ENCODE measurements at regions of chr18 and their contacts with region 1.

Region 1: DNA sequence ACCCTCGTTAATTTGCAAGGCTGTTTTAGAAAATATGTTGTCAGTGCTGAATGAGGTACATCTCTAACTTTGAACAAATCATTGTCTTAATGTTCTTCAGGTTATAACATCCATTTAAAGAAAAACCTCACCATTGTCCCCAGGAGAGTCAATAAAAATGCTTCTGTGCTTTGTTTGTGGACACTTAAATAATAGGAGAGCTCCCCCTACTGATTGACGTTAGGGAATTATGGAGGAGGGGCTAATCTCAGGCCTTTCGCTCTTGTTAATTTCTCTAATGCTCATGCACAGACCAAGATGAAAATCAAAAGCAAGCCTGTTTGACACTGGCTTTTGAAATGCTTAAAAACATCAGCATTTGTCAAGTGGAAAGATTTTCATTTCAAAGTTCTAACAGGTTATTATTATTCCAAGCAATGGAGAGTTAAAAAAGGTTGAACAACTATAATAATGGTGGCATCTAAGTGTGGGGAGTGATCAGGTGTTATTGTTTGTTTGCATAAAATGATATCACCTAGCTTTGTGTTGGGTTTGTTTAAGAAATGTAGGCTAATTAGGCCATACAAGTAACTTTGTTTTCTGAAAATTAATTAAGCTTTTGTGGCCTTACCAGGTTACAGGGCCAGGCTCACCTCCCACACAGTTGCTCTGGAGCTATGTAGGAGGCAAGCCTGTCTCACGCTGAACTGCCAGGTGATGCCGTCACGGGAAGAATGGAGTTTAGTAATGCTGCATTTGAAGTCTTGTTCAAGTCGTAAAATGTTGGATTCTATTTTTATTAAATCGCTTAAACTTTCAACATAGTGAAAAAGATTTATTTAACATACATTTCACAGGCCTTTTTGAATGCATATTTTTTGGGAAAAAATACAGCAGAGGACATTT is 51.7 kb upstream of the SMIM21 start:
- DNase-seq: peak; percentile 34
- ATAC-seq: peak; percentile 83
- H3K4me3 ChIP-seq: no peak overlapping the region
- H3K27ac ChIP-seq: no peak overlapping the region
- H3K4me1 ChIP-seq: no peaks in the 10 kb centered on the region
- H3K27me3 ChIP-seq: no peaks in the 10 kb centered on the region; a peak in 1 of 5 replicates
- CTCF ChIP-seq: peak; percentile 68
- EP300 ChIP-seq: no peak
- POLR2A ChIP-seq: no peak
- RAD21 ChIP-seq: no peak

Region 2: DNA sequence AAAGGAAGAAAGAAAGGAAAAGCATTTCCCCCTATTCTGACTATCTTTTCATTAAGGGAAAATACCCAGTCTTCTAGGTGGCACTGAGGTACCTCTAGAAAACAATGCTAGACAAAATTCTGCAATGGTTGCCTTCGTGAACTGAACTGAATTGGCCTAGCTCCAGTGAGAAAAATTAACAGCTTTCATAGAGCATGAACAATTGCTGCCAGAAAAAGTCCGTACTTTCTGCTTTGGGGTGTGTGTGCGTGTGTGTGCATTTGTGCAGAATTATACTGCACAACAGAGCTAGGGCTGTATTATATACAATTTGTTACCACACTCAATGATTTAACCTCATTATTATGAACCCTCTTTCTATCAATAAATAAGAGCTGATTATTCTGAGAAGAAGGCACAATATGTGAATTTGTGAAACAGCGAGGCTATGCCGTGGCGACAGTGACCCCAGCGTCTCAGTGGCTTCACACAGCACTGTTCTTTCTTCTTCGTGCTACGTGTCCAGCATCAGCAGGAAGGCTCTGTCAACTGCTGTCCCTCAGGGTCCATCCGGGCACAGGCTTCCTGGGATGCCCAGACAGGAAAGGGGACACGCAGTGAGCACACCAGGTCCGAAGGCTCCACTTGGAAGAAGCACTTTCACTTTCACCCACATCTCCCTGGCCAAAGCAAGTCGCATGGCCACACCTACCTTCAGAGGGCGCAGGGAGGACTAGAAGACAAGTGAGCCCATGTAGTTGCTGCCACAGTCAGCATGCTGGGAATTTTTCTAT is 317.8 kb before region 1 on chr18:
- CTCF ChIA-PET with region 1: no interaction called
- POLR2A ChIA-PET with region 1: no interaction called
- in situ Hi-C with region 1: loop called (anchors 25 kb)
- intact Hi-C with region 1: loop called (anchors 2 kb)
- DNase-seq: peak; percentile 77
- ATAC-seq: peak; percentile 96
- H3K4me3 ChIP-seq: peak overlapping the region; percentile 53 to 80 (median 61)
- H3K27ac ChIP-seq: no peak overlapping the region
- H3K4me1 ChIP-seq: peaks cover 13% of the 10 kb centered on the region
- H3K27me3 ChIP-seq: peaks cover 0 to 17% of the 10 kb centered on the region in 2 experiments; a peak in 4 of 5 replicates
- CTCF ChIP-seq: peak; percentile 64
- EP300 ChIP-seq: no peak
- POLR2A ChIP-seq: no peak
- RAD21 ChIP-seq: no peak

Region 3: DNA sequence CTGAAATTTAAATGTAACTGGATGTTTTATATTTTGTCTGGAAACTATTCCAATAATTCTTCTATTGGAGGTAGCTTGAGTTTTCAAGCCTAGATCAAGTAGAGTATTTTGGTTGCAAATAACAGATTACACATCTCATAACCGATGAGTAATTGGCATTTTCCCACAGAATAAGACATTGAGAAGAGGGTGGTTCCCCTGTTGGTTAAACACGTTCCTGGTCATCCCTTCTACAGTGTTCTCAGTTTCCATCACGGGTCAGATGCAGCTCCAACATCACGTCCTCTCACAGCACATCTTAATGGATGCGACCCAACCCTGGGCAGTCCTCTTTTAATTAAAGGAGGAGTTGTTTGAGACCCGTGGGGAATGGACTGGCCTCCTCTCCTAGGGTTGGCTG is 1164.8 kb after region 1 on chr18:
- CTCF ChIA-PET with region 1: no interaction called
- POLR2A ChIA-PET with region 1: no interaction called
- in situ Hi-C with region 1: no loop called
- intact Hi-C with region 1: no loop called
- DNase-seq: no peak
- ATAC-seq: no peak
- H3K4me3 ChIP-seq: no peak overlapping the region
- H3K27ac ChIP-seq: no peak overlapping the region
- H3K4me1 ChIP-seq: no peaks in the 10 kb centered on the region
- H3K27me3 ChIP-seq: peaks cover 0 to 13% of the 10 kb centered on the region in 2 experiments; a peak in 3 of 5 replicates
- CTCF ChIP-seq: no peak
- EP300 ChIP-seq: no peak
- POLR2A ChIP-seq: no peak
- RAD21 ChIP-seq: no peak